T-cell (primary cell): ENCODE measurements at regions of chr6 and their contacts with region 1.

Region 1: GRCh38 chr6:44275749-44276648 is 5.7 kb downstream of the TMEM151B start:
- DNase-seq: peak in 3 of 35 experiments; percentile 35 to 57 (median 42)
- ATAC-seq: peak; percentile 65 to 85 (median 69)
- H3K4me3 ChIP-seq: no peak overlapping the region
- H3K4me3 Mint-ChIP-seq: peak overlapping the region in 1 of 3 donors; percentile 57
- H3K27ac ChIP-seq: no peak overlapping the region
- H3K27ac Mint-ChIP-seq: no peak overlapping the region
- H3K4me1 ChIP-seq: peaks cover 0 to 16% of the 10 kb centered on the region in 2 experiments
- H3K4me1 Mint-ChIP-seq: peaks cover 0 to 10% (median 7%) of the 10 kb centered on the region in 3 donors
- H3K27me3 ChIP-seq: peaks cover 11 to 92% of the 10 kb centered on the region in 2 experiments
- H3K27me3 Mint-ChIP-seq: peaks cover 57 to 69% of the 10 kb centered on the region in 2 donors

Region 2: GRCh38 chr6:44002593-44003344 is 273.2 kb before region 1 on chr6:
- CTCF ChIA-PET with region 1: no interaction called
- POLR2A ChIA-PET with region 1: no interaction called
- DNase-seq: peak; percentile 4 to 67 (median 34)
- ATAC-seq: peak; percentile 80 to 86 (median 83)
- H3K4me3 ChIP-seq: peak overlapping the region; percentile 43 to 71
- H3K4me3 Mint-ChIP-seq: peak overlapping the region; percentile 62 to 73 (median 68)
- H3K27ac ChIP-seq: no peak overlapping the region
- H3K27ac Mint-ChIP-seq: no peak overlapping the region
- H3K4me1 ChIP-seq: peaks cover 0 to 28% of the 10 kb centered on the region in 2 experiments
- H3K4me1 Mint-ChIP-seq: peaks cover 4 to 10% (median 9%) of the 10 kb centered on the region in 3 donors
- H3K27me3 ChIP-seq: peaks cover 2 to 79% of the 10 kb centered on the region in 2 experiments
- H3K27me3 Mint-ChIP-seq: peaks cover 33 to 64% of the 10 kb centered on the region in 2 donors

Region 3: DNA sequence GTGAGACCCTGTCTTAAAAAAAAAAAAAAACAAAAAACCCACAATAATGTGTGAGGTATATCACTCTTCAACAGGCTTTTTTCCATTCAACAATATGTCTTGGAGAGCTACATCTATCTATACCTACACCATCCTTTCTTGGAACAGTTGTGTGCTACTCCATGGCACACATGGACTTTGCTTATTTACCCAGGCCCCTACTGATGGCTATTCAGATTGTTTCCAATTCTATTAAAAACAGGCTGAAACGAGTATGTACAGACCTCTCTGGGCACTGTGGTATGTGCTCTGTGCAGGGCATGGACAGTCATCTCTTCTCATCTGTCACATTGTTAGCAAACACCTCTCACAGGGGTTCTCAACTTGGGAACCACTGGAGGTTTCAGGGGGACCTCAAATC is 176.8 kb before region 1 on chr6:
- CTCF ChIA-PET with region 1: no interaction called
- POLR2A ChIA-PET with region 1: interaction called in 1 of 2 experiments, 12 read pairs
- DNase-seq: no peak
- ATAC-seq: no peak
- H3K4me3 ChIP-seq: no peak overlapping the region
- H3K4me3 Mint-ChIP-seq: no peak overlapping the region
- H3K27ac ChIP-seq: no peak overlapping the region
- H3K27ac Mint-ChIP-seq: no peak overlapping the region
- H3K4me1 ChIP-seq: peaks cover 0 to 4% of the 10 kb centered on the region in 2 experiments
- H3K4me1 Mint-ChIP-seq: peaks cover 7 to 28% (median 12%) of the 10 kb centered on the region in 3 donors
- H3K27me3 ChIP-seq: no peaks in the 10 kb centered on the region
- H3K27me3 Mint-ChIP-seq: no peaks in the 10 kb centered on the region

Region 4: DNA sequence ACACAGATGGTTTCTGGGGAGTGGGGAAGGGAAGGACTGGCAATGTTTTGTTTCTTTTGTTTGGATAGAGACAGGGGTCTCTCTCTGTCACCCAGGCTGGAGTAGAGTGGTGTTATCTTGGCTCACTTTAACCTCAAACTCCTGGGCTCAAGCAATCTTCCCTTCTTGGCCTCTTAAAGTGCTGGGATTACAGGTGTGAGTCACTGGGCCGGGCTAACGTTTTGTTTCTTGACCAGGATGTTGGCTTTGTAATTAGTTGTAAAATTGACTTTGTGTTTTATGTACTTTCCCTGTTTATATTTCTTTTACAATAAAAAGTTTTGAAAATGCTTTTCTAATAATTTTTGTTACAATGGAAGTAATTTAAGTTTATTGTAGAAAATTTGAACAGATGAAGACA is 77.3 kb after region 1 on chr6:
- CTCF ChIA-PET with region 1: no interaction called
- POLR2A ChIA-PET with region 1: no interaction called
- DNase-seq: no peak
- ATAC-seq: no peak
- H3K4me3 ChIP-seq: no peak overlapping the region
- H3K4me3 Mint-ChIP-seq: no peak overlapping the region
- H3K27ac ChIP-seq: no peak overlapping the region
- H3K27ac Mint-ChIP-seq: no peak overlapping the region
- H3K4me1 ChIP-seq: no peaks in the 10 kb centered on the region
- H3K4me1 Mint-ChIP-seq: no peaks in the 10 kb centered on the region
- H3K27me3 ChIP-seq: peaks cover 0 to 8% of the 10 kb centered on the region in 2 experiments
- H3K27me3 Mint-ChIP-seq: peaks cover 4 to 7% of the 10 kb centered on the region in 2 donors